ENCODE measurements at regions of chr7 and their contacts with region 1.

Region 1: DNA sequence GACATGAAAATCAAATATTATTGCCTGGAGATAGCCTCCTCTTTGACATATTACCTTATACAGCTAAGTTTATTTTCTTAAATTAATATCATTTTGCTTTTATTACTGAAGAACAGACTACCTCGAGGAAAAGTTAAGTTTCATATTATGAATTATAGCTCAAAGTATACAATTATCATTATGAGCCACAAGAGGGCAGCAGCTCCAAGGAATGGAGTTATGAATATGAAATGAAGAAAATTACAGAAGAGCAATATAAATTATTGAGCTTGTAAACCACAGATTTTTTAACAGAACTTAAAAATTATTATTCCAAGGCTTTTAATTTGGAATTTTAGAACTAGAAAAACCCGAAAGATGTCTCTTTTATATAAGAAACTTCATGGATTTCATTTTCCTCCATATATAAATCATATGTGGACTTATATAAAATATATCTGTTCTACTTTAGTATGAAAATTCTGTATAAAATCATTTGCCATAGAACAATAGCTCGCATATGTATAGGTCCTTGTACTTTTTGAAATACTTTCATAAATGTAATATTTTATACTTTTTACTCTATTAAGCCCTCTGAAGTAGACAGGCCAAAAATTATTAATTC is 40.1 kb downstream of the IQUB start:
- DNase-seq: peak; percentile 20 to 40
- ATAC-seq: peak in 1 of 2 experiments; percentile 70; a peak in 3 of 6 replicates
- H3K4me3 ChIP-seq: no peak overlapping the region
- H3K27ac ChIP-seq: no peak overlapping the region
- H3K4me1 ChIP-seq: no peaks in the 10 kb centered on the region
- CTCF ChIP-seq: peak; percentile 73
- EP300 ChIP-seq: no peak
- POLR2A ChIP-seq: no peak
- RAD21 ChIP-seq: peak; percentile 74

Region 2: GRCh38 chr7:123265853-123266252 is 228.4 kb before region 1 on chr7:
- CTCF ChIA-PET with region 1: no interaction called
- POLR2A ChIA-PET with region 1: no interaction called
- DNase-seq: no peak
- ATAC-seq: no peak
- H3K4me3 ChIP-seq: no peak overlapping the region
- H3K27ac ChIP-seq: no peak overlapping the region
- H3K4me1 ChIP-seq: no peaks in the 10 kb centered on the region
- CTCF ChIP-seq: no peak
- EP300 ChIP-seq: no peak
- POLR2A ChIP-seq: no peak
- RAD21 ChIP-seq: no peak

Region 3: GRCh38 chr7:123534383-123535260 is 40.3 kb after region 1 on chr7 and contains the start of gene IQUB:
- CTCF ChIA-PET with region 1: interaction called, 10 read pairs
- POLR2A ChIA-PET with region 1: no interaction called
- DNase-seq: peak; percentile 88 to 96
- ATAC-seq: peak; percentile 91 to 92
- H3K4me3 ChIP-seq: peak within 1 kb of the TSS; percentile 63
- H3K27ac ChIP-seq: peak within 1 kb of the TSS; percentile 78 to 89
- H3K4me1 ChIP-seq: peaks cover 21% of the 10 kb centered on the region
- CTCF ChIP-seq: no peak
- EP300 ChIP-seq: no peak
- POLR2A ChIP-seq: no peak
- RAD21 ChIP-seq: no peak
- polyA plus RNA-seq, gene IQUB: 0.05 and 0.08 TPM in 2 replicates

Region 4: GRCh38 chr7:123705211-123705901 is 211.1 kb after region 1 on chr7:
- CTCF ChIA-PET with region 1: no interaction called
- POLR2A ChIA-PET with region 1: no interaction called
- DNase-seq: no peak
- ATAC-seq: no peak
- H3K4me3 ChIP-seq: no peak overlapping the region
- H3K27ac ChIP-seq: no peak overlapping the region
- H3K4me1 ChIP-seq: peaks cover 8% of the 10 kb centered on the region; the same call in 2 of the 3 replicates
- CTCF ChIP-seq: no peak
- EP300 ChIP-seq: no peak
- POLR2A ChIP-seq: no peak
- RAD21 ChIP-seq: no peak